AG04450 (cell line): ENCODE measurements at regions of chr3 and their contacts with region 1.

Region 1: GRCh38 chr3:111717601-111718000 is 122.5 kb upstream of the ZBED2 start:
- DNase-seq: peak; percentile 72
- H3K4me3 ChIP-seq: no peak overlapping the region
- H3K27ac ChIP-seq: no peak overlapping the region
- H3K27me3 ChIP-seq: no peaks in the 10 kb centered on the region
- CTCF ChIP-seq: peak; percentile 90

Region 2: GRCh38 chr3:111691293-111691909 is 26.2 kb before region 1 on chr3:
- CTCF ChIA-PET with region 1: interaction called, 36 read pairs
- POLR2A ChIA-PET with region 1: no interaction called
- DNase-seq: no peak
- H3K4me3 ChIP-seq: no peak overlapping the region
- H3K27ac ChIP-seq: no peak overlapping the region
- H3K27me3 ChIP-seq: peaks cover 2% of the 10 kb centered on the region
- CTCF ChIP-seq: peak; percentile 61

Region 3: DNA sequence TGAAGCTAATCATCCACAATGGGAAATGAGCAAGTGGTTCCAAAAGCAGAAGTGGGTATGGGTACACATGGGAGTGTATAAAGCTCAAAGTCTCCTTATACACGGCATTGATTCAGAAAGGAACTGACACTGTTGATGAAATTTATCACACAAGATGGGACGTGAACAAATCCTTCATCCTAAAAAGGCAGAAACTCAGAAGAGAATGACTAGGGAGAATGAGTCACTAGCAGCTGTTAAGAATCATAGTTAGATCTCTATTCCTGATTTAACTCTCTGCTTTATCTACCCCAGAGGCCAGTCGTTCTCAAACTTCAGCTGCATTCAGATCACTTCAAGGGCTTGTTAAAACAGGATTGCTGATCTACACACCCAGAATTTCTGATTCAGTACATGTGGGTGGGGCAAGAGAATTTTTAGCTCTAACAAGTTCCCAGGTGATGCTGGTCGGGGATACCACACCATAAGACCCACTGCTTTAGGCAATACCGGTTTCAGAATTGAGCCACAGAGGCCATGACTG is 43.8 kb after region 1 on chr3:
- CTCF ChIA-PET with region 1: interaction called, 17 read pairs
- POLR2A ChIA-PET with region 1: no interaction called
- DNase-seq: no peak
- H3K4me3 ChIP-seq: no peak overlapping the region
- H3K27ac ChIP-seq: peak overlapping the region; percentile 63
- H3K27me3 ChIP-seq: no peaks in the 10 kb centered on the region
- CTCF ChIP-seq: no peak

Region 4: DNA sequence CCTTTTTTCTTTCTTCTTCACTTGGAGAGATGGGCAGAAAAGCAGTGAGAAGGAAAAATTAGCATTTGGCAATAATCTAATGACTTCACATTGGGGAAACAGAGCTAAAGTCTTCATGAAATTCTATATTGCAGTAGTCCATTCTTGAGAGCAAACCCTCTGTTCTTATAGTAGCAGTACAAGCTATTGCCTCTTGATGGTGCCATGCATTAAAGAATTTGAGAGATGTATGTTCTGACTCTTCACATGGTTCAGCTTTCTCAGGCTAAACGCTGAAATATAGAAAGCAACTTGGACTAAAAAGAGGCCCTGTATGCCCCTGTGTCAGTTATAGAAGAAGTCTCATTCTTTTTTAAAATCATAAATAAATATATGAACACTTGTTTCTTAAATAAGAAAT is 177.5 kb after region 1 on chr3:
- CTCF ChIA-PET with region 1: interaction called, 61 read pairs
- POLR2A ChIA-PET with region 1: no interaction called
- DNase-seq: no peak
- H3K4me3 ChIP-seq: no peak overlapping the region
- H3K27ac ChIP-seq: no peak overlapping the region
- H3K27me3 ChIP-seq: no peaks in the 10 kb centered on the region
- CTCF ChIP-seq: peak; percentile 74

Region 5: GRCh38 chr3:111967651-111968274 is 250.2 kb after region 1 on chr3:
- CTCF ChIA-PET with region 1: interaction called, 276 read pairs
- POLR2A ChIA-PET with region 1: interaction called, 3 read pairs
- DNase-seq: peak; percentile 59
- H3K4me3 ChIP-seq: no peak overlapping the region
- H3K27ac ChIP-seq: no peak overlapping the region
- H3K27me3 ChIP-seq: no peaks in the 10 kb centered on the region
- CTCF ChIP-seq: peak; percentile 92

Region 6: GRCh38 chr3:111989061-111989678 is 271.6 kb after region 1 on chr3:
- CTCF ChIA-PET with region 1: interaction called, 12 read pairs
- POLR2A ChIA-PET with region 1: no interaction called
- DNase-seq: peak; percentile 32
- H3K4me3 ChIP-seq: no peak overlapping the region
- H3K27ac ChIP-seq: no peak overlapping the region
- H3K27me3 ChIP-seq: no peaks in the 10 kb centered on the region
- CTCF ChIP-seq: peak; percentile 83